ENCODE measurements at regions of chr7 and their contacts with region 1.

Region 1: DNA sequence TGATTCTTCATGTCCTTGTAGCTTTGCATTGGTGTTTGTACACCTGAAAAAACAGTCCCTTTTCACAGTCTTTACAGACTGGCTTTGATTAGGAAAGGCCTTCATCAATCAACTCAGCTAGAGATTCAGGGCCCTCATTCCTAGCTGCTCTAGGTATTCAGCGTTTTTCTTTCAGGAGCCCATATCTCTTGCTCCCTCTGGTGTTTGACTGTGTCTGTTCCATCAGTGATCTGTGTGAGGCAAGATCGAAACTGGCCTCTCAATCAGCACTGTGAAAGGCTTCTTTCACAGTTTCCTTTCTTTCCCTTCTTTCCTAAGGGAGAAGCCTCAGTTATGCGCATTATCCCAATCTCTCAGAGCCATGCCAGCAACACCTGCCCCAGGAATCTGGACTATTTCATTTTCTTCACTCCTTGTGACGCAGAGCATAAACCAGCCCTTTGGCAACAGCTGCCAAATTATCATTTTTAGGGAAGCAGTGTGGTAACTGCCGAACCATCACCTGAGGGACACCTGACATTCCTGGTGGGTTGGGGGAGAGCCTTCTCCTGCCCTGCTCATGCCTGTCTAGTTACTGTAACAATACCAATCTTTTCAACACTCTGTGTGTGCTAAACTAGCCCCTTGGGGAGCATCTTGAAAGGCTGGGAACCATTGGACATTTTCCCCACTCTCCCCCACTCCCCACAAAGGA is 75.7 kb upstream of the CCDC71L start:
- DNase-seq: no peak
- ATAC-seq: peak; percentile 72

Region 2: GRCh38 chr7:106176414-106177299 is 560.0 kb before region 1 on chr7:
- intact Hi-C with region 1: loop called (anchors 10 kb)
- DNase-seq: peak; percentile 91
- ATAC-seq: peak; percentile 88

Region 3: GRCh38 chr7:106542550-106543220 is 194.0 kb before region 1 on chr7:
- intact Hi-C with region 1: loop called (anchors 10 kb)
- DNase-seq: no peak
- ATAC-seq: peak; percentile 87

Region 4: DNA sequence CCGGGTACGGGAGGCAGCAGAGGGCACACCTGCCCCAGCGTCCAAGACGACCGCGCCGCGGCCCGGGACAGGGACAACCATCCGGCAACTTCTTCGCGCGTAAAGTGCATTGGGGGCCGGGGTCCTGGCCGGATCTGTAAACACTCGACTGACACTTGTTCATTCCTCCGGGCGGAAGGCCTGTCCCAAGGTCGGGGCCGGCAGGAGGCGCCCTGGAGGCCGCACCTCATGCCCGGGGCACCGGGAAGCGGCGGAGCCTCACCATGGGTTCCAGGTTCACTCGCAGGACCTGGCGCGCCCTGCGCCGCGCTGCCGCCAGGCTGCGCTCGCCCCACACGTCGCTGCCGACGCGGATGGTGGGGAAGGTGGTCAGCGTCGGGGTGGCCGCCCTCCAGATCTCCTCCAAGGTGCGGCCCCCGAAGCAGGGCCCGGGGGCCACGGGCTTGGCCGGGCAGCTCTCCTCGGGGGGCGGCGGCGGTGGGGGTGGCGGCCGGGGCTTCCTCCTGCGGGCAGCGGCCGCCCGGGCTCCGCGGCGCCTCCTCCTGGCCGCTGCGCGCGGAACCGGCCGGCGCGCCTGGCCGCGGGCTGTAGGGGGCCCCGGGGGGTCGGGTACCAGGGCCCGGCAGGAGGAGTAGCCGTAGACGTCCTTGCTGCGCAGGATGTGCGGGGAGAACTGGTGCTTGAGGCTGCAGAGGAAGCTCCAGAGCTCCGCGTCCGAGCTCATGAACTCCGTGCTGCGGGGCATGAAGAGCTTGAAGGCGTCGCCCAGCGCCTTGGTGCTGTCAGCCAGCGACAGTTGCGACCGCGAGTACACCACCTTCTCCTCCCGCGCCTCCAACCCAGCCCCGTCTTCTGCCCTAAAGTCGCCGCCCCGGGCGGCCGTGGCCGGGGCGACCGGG is 76.4 kb before region 1 on chr7:
- intact Hi-C with region 1: loop called (anchors 10 kb)
- DNase-seq: peak; percentile 87
- ATAC-seq: peak; percentile 66